ENCODE measurements at regions of chr13 and their contacts with region 1.

Region 1: GRCh38 chr13:31797154-31797775 is 57.9 kb downstream of the RXFP2 start:
- H3K4me3 Mint-ChIP-seq: no peak overlapping the region
- H3K27ac Mint-ChIP-seq: peak overlapping the region; percentile 35
- H3K4me1 Mint-ChIP-seq: peaks cover 34% of the 10 kb centered on the region
- H3K27me3 Mint-ChIP-seq: no peaks in the 10 kb centered on the region

Region 2: DNA sequence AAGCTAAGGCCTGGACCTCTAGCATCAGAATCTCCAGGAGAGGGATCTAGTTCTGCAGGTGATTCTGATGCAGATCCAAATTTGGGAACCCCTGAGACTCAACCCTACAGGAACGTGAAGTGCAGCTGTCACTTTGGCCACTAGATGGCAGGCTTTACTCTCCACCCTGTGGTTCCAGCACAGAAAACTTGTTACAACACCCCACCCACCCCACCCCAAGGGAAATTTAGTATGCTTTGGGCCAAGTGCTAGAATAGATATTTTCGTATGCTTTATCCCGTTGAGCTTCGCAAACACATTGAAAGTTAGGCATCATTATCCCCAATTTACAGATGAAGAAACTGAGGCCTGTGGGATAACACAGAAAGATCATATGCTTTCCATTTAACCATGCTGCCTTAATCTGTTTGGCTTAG is 365.5 kb before region 1 on chr13:
- intact Hi-C with region 1: loop called (anchors 5 kb)
- H3K4me3 Mint-ChIP-seq: no peak overlapping the region
- H3K27ac Mint-ChIP-seq: no peak overlapping the region
- H3K4me1 Mint-ChIP-seq: peaks cover 8% of the 10 kb centered on the region
- H3K27me3 Mint-ChIP-seq: peaks cover 8% of the 10 kb centered on the region

Region 3: DNA sequence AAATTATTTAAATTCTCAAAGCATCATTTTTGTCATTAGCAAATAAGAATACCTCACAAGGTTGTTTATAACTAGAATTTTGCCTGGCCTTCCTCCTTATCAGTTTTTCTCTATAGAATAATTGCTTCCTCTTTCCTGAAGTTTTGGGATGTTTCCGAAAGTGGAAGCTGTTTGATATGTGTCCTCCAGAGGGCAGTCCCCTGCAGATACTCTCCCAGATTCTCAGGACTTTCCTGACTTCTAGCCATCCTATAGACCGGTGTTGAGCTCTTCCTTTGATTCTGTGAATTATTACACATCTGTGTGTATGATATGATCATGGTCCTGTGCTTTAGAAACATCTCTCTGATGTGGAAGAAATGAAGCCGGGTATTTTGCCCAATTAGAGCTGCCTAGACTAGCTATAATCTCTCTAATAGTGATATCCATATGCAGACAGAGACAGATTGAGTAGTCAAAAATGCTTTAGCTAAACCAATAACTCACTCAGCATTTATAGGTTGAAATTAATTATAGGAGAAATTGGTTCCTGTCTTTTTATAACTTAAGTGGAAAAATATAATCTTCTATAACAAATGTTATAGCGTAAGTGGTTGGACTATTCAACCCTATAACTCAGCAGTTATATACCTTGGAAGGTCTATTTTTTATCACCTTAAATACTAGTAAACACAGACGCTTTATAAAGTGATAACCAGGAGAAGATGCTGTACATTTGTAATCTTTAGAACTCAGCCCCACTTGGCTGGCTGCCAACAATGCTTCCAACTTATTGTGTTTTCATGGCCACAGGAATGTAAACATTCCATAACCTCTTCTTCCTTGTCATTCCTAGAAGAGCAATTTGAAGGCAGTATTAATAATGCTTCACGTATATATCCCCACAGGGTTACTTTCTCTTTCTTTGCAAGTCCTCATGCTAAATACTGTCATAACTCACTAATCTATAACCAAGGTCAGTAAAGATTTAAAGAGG is 258.9 kb before region 1 on chr13:
- intact Hi-C with region 1: loop called (anchors 5 kb)
- H3K4me3 Mint-ChIP-seq: no peak overlapping the region
- H3K27ac Mint-ChIP-seq: no peak overlapping the region
- H3K4me1 Mint-ChIP-seq: no peaks in the 10 kb centered on the region
- H3K27me3 Mint-ChIP-seq: peaks cover 8% of the 10 kb centered on the region

Region 4: GRCh38 chr13:31595563-31595962 is 201.7 kb before region 1 on chr13:
- intact Hi-C with region 1: no loop called
- H3K4me3 Mint-ChIP-seq: no peak overlapping the region
- H3K27ac Mint-ChIP-seq: no peak overlapping the region
- H3K4me1 Mint-ChIP-seq: no peaks in the 10 kb centered on the region
- H3K27me3 Mint-ChIP-seq: peaks cover 3% of the 10 kb centered on the region

Region 5: DNA sequence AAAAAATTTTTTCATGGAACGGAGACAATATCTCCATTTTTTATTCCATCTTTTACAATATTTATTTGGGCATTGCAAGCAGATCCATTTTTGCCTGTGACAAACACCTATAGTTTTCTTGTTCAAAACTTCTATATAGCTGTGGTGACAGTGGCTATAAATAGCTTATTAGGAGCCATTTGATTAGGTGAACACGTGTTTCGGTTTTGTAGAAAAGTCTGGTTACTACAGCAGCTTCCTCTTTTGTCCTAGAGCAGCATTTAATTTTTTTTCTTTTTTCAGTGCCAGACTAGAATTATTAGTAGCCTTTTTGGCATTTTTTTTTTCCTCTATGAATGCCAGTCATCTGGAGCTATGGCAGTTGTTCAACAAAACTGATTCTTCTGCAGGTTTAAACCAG is 65.6 kb after region 1 on chr13:
- intact Hi-C with region 1: no loop called
- H3K4me3 Mint-ChIP-seq: no peak overlapping the region
- H3K27ac Mint-ChIP-seq: no peak overlapping the region
- H3K4me1 Mint-ChIP-seq: peaks cover 38% of the 10 kb centered on the region
- H3K27me3 Mint-ChIP-seq: no peaks in the 10 kb centered on the region